ENCODE measurements at regions of chr14 and their contacts with region 1.

Region 1: DNA sequence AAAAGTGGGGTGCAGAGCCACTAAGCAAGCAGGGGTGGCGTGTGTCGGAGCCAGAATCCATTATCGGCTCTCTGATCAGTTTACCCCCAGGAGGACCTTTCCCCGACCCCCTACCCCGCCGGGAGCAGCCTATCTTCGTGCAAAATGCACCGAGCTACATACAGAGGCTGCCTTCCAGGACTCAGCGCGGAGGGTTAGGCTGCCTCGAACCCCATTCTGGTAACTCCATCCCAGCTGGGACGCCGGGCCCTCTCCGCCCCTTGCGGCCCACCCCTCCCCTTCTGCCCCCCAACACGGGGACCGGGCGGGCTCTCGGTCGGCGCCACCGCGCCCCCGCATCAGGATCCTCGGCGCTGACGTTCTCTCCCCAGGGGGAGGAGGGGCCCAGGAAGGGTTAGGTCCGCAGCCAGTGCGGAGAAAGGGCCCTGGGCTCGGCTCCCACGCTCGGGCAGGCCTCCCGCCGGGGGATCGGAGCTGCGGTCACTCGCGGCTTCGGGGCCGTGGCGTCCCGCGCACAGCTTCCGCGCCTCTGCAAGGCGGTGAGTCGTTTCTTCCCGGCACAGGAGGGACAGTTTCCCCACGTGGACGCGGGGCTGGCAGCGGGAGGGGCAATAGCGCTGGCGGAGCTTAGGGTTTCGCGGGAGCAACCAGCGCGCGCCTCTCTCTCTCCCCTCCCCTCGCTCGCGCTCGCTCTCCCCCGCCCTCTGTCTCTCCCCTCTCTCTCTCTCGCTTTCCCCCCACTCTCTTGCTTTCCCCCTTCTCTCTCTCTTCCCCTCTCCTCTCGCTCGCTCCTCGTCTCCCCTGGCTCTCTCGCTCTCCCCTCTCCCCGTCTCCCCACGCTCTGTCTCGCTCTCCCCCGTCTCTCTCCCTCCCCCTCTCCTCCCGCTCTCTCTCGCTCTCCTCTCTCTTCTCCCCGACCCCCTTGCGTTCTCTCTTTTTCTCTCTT is 12.5 kb upstream of the MAP3K9 start:
- DNase-seq: peak; percentile 41
- ATAC-seq: peak; percentile 44
- H3K4me3 ChIP-seq: peak overlapping the region; percentile 76
- H3K27ac ChIP-seq: no peak overlapping the region
- H3K4me1 ChIP-seq: peaks cover 23% of the 10 kb centered on the region
- H3K27me3 ChIP-seq: no peaks in the 10 kb centered on the region
- CTCF ChIP-seq: no peak

Region 2: GRCh38 chr14:70245026-70245425 is 576.8 kb before region 1 on chr14:
- CTCF ChIA-PET with region 1: no interaction called
- POLR2A ChIA-PET with region 1: no interaction called
- intact Hi-C with region 1: no loop called
- DNase-seq: no peak
- ATAC-seq: no peak
- H3K4me3 ChIP-seq: no peak overlapping the region
- H3K27ac ChIP-seq: no peak overlapping the region
- H3K4me1 ChIP-seq: no peaks in the 10 kb centered on the region
- H3K27me3 ChIP-seq: peaks cover 41% of the 10 kb centered on the region
- CTCF ChIP-seq: no peak

Region 3: DNA sequence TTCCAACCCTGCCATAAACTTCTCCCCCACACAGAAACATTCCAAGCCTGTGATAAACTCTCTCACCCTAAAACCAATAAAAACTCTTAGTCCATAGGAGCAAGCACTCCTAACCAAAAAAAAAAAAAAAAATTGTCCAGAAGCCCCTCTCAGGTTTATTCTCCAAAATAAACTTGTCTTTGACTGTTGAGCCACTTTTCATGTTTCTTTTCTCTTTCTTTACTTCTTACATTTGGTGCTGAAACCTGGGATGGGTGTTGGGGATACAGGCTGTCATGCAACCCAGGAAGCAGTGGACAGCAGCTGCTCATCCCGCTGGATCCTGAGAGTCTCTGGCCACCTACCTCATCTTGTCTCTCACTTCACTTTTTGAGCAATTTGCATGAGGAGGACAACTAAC is 285.0 kb before region 1 on chr14:
- CTCF ChIA-PET with region 1: no interaction called
- POLR2A ChIA-PET with region 1: interaction called, 30 read pairs
- intact Hi-C with region 1: no loop called
- DNase-seq: no peak
- ATAC-seq: no peak
- H3K4me3 ChIP-seq: no peak overlapping the region
- H3K27ac ChIP-seq: no peak overlapping the region
- H3K4me1 ChIP-seq: no peaks in the 10 kb centered on the region
- H3K27me3 ChIP-seq: no peaks in the 10 kb centered on the region
- CTCF ChIP-seq: no peak

Region 4: DNA sequence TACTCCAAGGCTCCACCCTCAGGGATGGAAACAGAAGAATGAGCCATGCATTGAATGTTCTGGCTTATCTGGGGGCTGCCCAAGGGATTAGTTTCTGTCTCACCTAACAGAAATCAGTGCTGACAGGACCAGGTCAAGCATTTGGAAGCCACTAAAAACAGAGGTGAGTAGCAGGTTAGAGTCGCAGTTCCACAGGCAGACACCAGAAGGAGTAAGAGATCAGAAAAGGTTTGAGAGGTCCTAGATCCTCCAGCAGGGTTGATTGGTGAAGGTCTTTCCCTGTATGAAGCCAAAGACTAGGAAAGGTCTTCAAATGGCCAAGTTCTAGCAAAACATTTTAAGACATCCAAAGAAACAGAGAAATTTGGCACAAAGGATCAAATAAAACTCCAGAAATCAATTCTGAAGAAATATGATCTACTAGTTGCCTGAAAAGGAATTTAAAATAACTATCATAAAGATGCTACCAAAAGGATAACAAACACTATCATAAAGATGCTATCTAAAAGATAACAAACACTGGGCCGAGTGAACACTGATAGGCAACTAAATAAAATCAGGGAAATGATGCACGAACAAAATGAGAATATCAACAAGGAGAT is 199.6 kb before region 1 on chr14:
- CTCF ChIA-PET with region 1: interaction called, 5 read pairs
- POLR2A ChIA-PET with region 1: no interaction called
- intact Hi-C with region 1: loop called (anchors 1 kb)
- DNase-seq: peak; percentile 82
- ATAC-seq: peak; percentile 99
- H3K4me3 ChIP-seq: no peak overlapping the region
- H3K27ac ChIP-seq: no peak overlapping the region
- H3K4me1 ChIP-seq: peaks cover 5% of the 10 kb centered on the region; the same call in 1 of the 2 replicates
- H3K27me3 ChIP-seq: no peaks in the 10 kb centered on the region
- CTCF ChIP-seq: peak; percentile 94

Region 5: GRCh38 chr14:70832536-70833305 is 10.9 kb after region 1 on chr14:
- CTCF ChIA-PET with region 1: interaction called, 10 read pairs
- POLR2A ChIA-PET with region 1: no interaction called
- intact Hi-C with region 1: no loop called
- DNase-seq: peak; percentile 54
- ATAC-seq: peak; percentile 51
- H3K4me3 ChIP-seq: no peak overlapping the region
- H3K27ac ChIP-seq: no peak overlapping the region
- H3K4me1 ChIP-seq: peaks cover 11% of the 10 kb centered on the region; the same call in 1 of the 2 replicates
- H3K27me3 ChIP-seq: no peaks in the 10 kb centered on the region
- CTCF ChIP-seq: no peak

Region 6: GRCh38 chr14:70873627-70874026 is 51.8 kb after region 1 on chr14:
- CTCF ChIA-PET with region 1: no interaction called
- POLR2A ChIA-PET with region 1: no interaction called
- intact Hi-C with region 1: no loop called
- DNase-seq: no peak
- ATAC-seq: peak; percentile 46; the same call in 1 of the 2 replicates
- H3K4me3 ChIP-seq: no peak overlapping the region
- H3K27ac ChIP-seq: no peak overlapping the region
- H3K4me1 ChIP-seq: no peaks in the 10 kb centered on the region
- H3K27me3 ChIP-seq: no peaks in the 10 kb centered on the region
- CTCF ChIP-seq: no peak

Region 7: GRCh38 chr14:70955543-70956480 is 134.0 kb after region 1 on chr14:
- CTCF ChIA-PET with region 1: interaction called, 13 read pairs
- POLR2A ChIA-PET with region 1: interaction called, 6 read pairs
- intact Hi-C with region 1: loop called (anchors 1 kb)
- DNase-seq: peak; percentile 44
- ATAC-seq: peak; percentile 92
- H3K4me3 ChIP-seq: no peak overlapping the region
- H3K27ac ChIP-seq: no peak overlapping the region
- H3K4me1 ChIP-seq: no peaks in the 10 kb centered on the region; the same call in 1 of the 2 replicates
- H3K27me3 ChIP-seq: no peaks in the 10 kb centered on the region
- CTCF ChIP-seq: peak; percentile 93

Region 8: DNA sequence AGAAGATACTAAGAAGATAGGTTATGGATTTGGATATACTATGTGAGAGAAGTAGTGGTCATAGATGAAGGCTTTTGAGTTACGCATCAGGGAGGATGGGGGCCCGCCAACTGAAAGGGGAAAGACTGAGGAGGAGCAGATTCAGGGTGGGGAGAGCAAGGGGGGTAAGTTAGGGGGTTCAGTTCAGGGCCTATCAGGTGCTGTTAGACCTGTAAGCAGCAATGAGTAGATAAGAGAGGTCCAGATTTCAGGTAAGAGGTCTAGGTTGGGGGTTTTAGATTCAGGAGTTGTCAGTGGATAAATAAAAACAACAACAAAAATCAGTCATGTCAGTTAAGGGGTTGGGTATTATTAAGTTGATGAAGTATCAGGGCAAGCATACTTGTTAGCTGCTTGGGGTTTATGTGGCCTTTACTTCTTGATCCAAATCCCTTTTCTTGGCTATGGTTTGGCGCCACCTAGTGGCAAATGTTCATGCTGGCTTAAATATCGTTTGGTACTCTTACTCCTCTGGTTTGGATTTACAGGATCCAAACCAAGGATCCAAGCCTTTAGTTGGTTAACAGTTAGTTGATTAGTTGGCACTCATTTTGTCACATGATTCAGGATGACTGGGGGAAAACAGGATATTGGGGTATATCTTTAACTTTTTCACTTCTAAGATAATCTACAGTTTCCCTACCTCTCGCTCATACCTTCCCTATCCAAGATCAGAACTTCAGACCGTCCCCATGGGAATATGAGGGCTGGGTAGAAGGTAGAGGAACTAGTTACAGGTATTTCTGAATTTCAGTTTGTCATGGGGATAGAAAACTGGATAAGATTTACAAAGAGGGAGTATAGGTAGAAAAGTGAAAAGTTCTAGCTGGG is 150.5 kb after region 1 on chr14:
- CTCF ChIA-PET with region 1: interaction called, 10 read pairs
- POLR2A ChIA-PET with region 1: no interaction called
- intact Hi-C with region 1: loop called (anchors 1 kb)
- DNase-seq: peak; percentile 93
- ATAC-seq: peak; percentile 96
- H3K4me3 ChIP-seq: no peak overlapping the region
- H3K27ac ChIP-seq: no peak overlapping the region
- H3K4me1 ChIP-seq: no peaks in the 10 kb centered on the region
- H3K27me3 ChIP-seq: no peaks in the 10 kb centered on the region
- CTCF ChIP-seq: peak; percentile 97

Measured in PC-3 (cell line).